Left ventricle myocardium inferior (tissue), 1 donor: ENCODE measurements at regions of chr9 and their contacts with region 1.

Region 1: DNA sequence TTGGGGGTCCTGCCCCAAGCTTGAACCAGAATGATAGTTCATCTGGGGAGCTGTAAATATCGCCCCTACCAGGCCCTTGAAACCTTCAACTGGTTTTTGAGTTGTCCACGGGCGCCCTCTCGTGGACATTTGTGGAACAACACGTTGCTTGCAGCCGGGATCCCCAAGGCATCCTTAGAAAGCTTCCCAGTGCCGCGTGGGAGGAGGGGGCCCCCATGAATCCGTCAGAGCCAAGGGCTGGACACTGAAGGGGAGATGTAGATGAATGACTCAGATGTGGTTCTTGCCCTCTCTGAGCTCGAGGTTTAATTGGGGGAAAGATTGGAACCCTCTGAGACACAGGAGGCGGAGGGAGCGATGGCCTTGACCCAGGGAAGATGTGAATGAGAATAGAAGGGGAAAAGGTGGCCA is 31.8 kb upstream of the ORM1 start:
- DNase-seq: peak; percentile 65
- H3K4me3 ChIP-seq: no peak overlapping the region
- H3K27ac ChIP-seq: no peak overlapping the region
- H3K4me1 ChIP-seq: no peaks in the 10 kb centered on the region
- H3K27me3 ChIP-seq: no peaks in the 10 kb centered on the region
- CTCF ChIP-seq: peak; percentile 94

Region 2: DNA sequence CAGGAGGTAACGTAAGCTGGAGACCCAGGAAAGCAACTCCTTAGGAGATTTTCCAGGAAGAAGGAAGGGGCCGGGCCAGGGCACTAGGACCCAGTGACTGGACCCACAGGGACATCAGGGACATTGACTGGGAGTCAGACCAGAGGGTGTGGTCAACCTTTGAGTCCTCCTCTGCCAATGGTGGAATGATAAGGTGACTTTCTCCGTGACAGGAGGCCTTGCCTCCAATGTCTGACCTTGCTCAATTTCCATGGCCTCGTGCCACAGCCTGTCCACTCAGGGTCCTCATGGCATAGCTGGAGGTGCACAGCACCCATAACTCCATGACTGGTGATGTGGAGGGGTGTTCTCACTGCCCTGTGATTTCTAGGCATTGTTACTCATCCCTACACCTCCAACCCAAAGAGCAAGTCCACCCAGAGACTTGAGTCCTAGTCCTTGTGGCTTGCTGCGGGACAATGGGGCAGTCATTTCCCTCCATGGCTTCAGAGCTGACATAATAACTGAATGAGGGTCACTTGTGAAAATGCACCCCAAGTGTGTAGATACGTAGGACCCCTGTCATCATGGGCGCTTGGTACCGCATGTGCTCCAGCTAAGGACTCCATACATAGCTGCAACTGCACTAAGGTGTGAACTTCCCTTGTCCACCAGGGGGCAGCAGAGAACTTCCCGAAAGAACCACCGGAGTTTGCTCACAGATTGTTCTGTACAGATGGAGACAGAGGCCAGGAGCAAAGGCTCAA is 208.9 kb before region 1 on chr9:
- intact Hi-C with region 1: loop called (anchors 5 kb)
- DNase-seq: peak; percentile 82
- H3K4me3 ChIP-seq: no peak overlapping the region
- H3K27ac ChIP-seq: no peak overlapping the region
- H3K4me1 ChIP-seq: peaks cover 4% of the 10 kb centered on the region
- H3K27me3 ChIP-seq: peaks cover 23% of the 10 kb centered on the region
- CTCF ChIP-seq: peak; percentile 90

Region 3: DNA sequence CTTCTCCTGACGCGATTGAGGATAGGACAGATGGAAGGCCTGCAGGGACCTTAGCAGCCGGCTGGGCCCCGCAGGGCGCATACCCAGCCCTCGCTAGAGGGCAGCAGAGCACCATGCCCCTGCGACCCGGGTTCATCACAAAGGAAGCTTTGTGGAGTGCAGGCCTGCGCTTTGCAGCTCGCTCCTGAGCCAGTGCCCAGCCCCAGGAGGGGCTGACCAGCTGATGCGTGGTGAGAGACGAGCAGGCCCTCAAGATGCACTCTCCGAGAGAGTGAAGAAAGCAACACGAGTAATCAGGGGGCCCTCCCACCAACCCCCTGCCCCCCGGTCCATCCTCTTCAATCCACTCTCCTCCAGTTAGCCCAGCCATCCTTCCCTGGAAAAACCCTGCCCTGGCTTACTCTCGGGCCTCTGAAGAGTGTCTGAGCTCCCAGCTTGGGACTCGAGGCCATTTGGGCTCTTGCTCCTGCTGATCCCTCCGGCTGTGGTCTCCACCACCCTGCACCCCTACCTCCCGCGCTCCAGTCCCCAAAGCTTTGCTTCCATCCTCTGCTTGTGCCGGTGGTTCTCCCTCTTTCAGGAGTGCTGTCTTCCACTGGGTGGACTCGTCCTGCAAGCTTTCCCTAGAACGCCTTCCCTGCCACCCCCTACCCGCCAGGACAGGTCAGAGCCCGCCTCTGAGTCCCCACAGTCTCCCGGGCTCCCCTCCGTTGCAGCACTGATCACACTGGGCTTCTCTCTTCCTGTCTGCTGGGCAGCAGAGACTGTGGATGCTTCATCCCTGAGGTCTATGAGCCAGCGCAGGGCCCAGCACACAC is 182.8 kb before region 1 on chr9:
- intact Hi-C with region 1: loop called (anchors 5 kb)
- DNase-seq: peak; percentile 82
- H3K4me3 ChIP-seq: no peak overlapping the region
- H3K27ac ChIP-seq: peak overlapping the region; percentile 50
- H3K4me1 ChIP-seq: peaks cover 8% of the 10 kb centered on the region
- H3K27me3 ChIP-seq: peaks cover 7% of the 10 kb centered on the region
- CTCF ChIP-seq: peak; percentile 98

Region 4: DNA sequence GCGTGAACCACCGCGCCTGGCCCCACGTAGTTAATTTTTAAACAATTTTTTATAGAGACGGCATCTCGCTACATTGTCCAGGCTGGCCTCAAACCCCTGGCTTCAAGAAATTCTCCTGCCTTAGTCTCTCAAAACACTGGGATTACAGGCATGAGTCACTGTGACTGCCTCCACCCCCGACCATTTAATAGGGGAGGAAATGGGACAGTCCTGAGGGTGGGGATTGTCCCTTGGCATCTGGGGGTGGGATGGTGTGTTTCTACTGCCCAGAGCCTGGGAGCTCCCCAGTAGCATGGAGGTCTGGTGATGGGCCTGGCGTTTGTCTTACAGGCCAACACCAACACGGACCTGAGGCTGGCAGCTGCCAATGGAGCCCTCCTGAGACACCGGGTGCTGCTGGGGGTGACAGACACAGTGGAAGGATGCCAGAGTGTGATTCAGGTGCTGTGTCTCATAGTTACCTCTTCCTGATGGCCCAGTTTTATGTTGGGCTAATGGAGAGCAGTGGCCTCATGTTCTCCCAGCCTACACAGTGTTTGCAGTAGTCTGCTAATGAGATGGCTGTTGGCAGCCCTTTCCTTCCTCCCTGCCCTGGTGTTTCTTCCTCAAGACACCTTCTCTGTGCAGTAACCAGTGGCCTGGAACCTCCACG is 342.5 kb after region 1 on chr9:
- intact Hi-C with region 1: no loop called
- DNase-seq: no peak
- H3K4me3 ChIP-seq: no peak overlapping the region
- H3K27ac ChIP-seq: no peak overlapping the region
- H3K4me1 ChIP-seq: no peaks in the 10 kb centered on the region
- H3K27me3 ChIP-seq: no peaks in the 10 kb centered on the region
- CTCF ChIP-seq: no peak